AG04450 (cell line): ENCODE measurements at regions of chr5 and their contacts with region 1.

Region 1: DNA sequence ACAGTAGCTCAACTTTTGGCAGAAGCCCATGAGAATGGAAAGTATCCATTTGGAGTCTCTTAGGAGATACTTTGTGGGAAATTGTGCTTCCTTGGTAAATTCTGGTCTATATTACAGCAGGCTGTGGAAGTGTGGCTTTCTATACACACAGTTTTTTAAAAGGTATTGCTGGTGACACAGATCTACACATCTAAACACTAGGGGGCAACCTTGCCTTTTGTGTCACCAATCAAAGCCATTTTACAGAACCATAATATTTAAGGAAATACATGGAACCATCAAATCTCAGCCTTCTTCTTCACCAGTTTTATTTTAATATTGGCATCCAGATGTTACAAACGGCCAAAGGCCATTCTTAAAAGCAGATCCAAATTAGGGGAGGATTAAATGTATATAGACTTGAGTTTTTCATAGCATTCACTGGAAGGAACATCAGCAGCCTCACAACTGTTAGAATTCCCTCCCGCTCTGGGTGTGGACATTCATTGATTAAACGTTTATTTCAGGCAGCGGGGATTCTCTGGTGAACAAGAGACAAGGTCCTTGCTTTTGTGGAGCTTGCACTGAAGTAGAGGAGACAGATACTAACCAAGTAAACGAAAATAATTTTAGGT is 132.4 kb upstream of the EPB41L4A start:
- DNase-seq: peak; percentile 20
- H3K4me3 ChIP-seq: no peak overlapping the region
- H3K27ac ChIP-seq: no peak overlapping the region
- H3K27me3 ChIP-seq: peaks cover 4% of the 10 kb centered on the region
- CTCF ChIP-seq: peak; percentile 74

Region 2: DNA sequence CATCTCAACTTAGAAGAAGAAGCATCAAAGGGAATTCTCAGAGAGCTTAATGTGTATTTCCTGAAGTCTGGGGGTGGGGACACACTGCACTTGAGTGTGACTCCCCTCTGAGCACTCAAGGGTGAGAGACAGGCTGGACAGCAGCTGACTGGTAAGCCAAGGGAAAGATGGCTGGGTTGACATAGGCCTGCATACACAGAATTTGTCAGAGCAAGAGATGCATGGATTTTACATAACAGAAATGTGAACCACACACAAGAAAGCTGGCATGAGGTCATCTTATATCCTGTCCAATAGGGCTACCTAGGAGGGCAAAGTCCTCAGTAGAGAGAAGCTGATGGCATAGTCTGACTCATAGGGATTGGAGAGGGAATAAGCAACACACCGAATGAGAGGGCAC is 18.2 kb before region 1 on chr5:
- CTCF ChIA-PET with region 1: interaction called, 13 read pairs
- POLR2A ChIA-PET with region 1: no interaction called
- DNase-seq: no peak
- H3K4me3 ChIP-seq: no peak overlapping the region
- H3K27ac ChIP-seq: no peak overlapping the region
- H3K27me3 ChIP-seq: no peaks in the 10 kb centered on the region
- CTCF ChIP-seq: no peak

Region 3: DNA sequence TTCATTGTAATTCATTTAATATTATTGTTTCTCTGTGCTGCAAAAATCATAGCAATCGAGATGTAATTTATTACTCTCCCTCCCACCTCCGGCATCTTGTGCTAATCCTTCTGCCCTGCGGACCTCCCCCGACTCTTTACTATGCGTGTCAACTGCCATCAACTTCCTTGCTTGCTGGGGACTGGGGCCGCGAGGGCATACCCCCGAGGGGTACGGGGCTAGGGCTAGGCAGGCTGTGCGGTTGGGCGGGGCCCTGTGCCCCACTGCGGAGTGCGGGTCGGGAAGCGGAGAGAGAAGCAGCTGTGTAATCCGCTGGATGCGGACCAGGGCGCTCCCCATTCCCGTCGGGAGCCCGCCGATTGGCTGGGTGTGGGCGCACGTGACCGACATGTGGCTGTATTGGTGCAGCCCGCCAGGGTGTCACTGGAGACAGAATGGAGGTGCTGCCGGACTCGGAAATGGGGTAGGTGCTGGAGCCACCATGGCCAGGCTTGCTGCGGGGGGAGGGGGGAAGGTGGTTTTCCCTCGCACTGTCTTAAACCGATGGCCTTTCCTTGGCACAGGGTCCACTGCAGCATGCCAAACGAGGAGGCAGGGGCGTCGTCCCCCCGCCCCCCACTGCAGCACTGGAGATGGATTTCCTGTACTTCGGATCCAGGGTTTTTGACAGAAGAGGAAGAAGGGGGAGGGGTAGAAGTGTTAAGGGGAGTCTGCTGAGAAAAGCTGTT is 186.1 kb after region 1 on chr5 and contains the start of gene APC:
- CTCF ChIA-PET with region 1: interaction called, 11 read pairs
- POLR2A ChIA-PET with region 1: no interaction called
- DNase-seq: peak; percentile 66
- H3K4me3 ChIP-seq: peak within 1 kb of the TSS; percentile 94
- H3K27ac ChIP-seq: no peak within 1 kb of the TSS
- H3K27me3 ChIP-seq: no peaks in the 10 kb centered on the region
- CTCF ChIP-seq: no peak
- polyA plus RNA-seq, gene APC: 16.0 and 25.7 TPM in 2 replicates